ENCODE measurements at regions of chr11 and their contacts with region 1.

Region 1: GRCh38 chr11:134360050-134360835 is 28.5 kb downstream of the GLB1L2 start:
- DNase-seq: peak; percentile 80
- H3K4me3 ChIP-seq: no peak overlapping the region
- H3K27ac ChIP-seq: no peak overlapping the region
- H3K4me1 ChIP-seq: no peaks in the 10 kb centered on the region
- H3K27me3 ChIP-seq: no peaks in the 10 kb centered on the region
- CTCF ChIP-seq: peak; percentile 89

Region 2: GRCh38 chr11:133118563-133119268 is 1241.5 kb before region 1 on chr11:
- intact Hi-C with region 1: no loop called
- DNase-seq: no peak
- H3K4me3 ChIP-seq: no peak overlapping the region
- H3K27ac ChIP-seq: no peak overlapping the region
- H3K4me1 ChIP-seq: no peaks in the 10 kb centered on the region
- H3K27me3 ChIP-seq: no peaks in the 10 kb centered on the region
- CTCF ChIP-seq: no peak

Region 3: DNA sequence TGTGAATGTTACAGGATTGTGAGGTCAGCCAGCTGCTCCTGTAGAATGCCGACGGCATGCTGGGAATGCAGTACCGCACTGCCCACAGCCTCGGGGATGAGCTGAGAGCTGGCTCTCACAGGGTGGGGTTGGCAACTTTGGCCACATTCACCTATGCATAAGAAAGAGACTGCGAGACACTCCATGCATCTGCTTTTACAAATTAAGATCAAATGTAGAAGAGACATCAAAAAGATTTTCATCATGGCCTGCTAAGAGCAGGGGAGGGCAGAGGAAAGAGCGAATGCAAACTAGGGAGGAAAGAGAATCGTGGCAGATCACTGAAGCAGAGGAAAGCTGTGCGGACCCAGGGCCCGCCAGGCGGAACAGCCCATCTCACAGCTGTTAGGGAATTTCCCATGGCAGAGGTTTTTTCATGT is 465.2 kb before region 1 on chr11:
- intact Hi-C with region 1: no loop called
- DNase-seq: no peak
- H3K4me3 ChIP-seq: no peak overlapping the region
- H3K27ac ChIP-seq: no peak overlapping the region
- H3K4me1 ChIP-seq: no peaks in the 10 kb centered on the region
- H3K27me3 ChIP-seq: no peaks in the 10 kb centered on the region
- CTCF ChIP-seq: no peak

Region 4: DNA sequence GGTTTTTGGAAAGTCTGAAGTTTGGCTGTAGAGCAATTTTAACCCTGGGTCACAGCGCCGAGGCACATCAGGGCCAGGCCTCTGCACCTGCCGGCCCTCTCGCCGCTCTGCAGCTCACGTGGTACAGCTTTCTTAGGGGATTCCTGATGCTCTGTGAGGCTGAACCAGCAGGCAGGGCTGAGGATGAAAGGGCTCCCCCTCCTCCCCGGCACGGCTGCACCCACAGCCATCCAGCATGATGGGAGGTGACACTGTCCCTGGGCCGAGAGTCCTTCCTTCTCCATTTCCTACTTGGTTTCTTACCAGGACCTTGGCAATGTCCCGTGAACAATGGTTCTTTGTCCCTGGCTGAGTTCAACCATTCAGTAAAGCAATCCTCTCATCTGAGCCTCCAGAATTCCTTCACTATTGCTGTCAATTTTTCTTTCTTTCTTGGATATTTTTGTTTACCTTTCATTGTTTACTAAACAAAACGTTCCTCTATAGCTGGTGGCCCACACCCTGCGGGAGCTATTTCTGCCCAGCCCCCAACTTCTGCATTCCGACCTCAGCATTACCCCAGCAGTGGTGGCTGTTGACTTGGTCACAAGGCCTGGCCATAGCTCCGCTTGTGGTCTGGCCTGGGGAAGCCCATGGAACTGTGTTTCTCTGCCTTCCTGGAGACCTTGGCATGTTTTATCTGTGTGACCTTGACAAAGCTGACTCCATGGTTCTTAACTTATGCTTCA is 224.6 kb after region 1 on chr11:
- intact Hi-C with region 1: loop called (anchors 10 kb)
- DNase-seq: no peak
- H3K4me3 ChIP-seq: no peak overlapping the region
- H3K27ac ChIP-seq: no peak overlapping the region
- H3K4me1 ChIP-seq: no peaks in the 10 kb centered on the region
- H3K27me3 ChIP-seq: no peaks in the 10 kb centered on the region
- CTCF ChIP-seq: no peak

Region 5: DNA sequence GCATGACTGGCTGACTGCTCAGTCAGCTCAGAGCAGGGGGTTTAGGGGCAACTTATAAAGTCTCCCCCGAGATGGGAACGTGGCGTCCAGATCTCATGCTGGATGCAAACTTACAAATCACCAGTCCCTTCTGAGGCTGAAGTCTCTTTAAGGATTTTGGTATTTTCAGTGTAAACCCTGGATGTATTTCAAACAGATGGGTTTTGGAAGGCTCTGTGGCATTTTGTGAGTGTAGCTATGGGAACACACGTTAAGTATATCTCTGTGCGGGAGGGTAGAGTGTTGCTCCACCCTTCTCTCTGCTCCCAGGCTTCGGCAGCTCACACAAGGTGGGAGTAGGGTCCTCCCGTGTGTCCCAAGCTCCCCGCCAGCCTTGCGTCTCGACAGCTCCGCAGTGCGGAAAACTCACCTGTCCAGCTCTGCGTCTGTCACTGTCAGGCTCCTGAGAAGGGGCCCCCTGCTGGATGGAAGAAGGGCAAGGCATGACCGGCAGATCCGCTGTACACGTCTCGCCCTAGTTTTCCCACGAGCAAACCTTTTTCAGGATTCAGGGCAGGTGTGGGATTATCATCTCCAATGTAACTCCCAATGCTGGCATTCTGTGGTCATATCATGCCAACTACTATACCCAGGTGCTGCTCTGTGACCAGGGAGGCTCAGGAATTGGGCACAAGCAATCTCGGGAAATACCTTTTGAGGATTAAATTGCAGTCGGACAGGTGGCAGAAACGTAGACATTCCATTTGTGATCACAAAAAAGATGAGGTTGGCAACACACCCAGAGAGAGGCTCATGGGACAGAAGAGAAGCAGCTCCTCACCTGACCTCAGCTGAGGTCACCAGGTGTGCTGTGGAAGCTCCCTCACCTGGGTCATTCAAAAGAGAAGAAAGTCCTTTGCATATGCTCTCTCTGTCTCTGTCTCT is 365.7 kb after region 1 on chr11:
- intact Hi-C with region 1: loop called (anchors 10 kb)
- DNase-seq: peak; percentile 42
- H3K4me3 ChIP-seq: no peak overlapping the region
- H3K27ac ChIP-seq: no peak overlapping the region
- H3K4me1 ChIP-seq: no peaks in the 10 kb centered on the region
- H3K27me3 ChIP-seq: no peaks in the 10 kb centered on the region
- CTCF ChIP-seq: no peak